Naive thymus-derived CD4-positive, alpha-beta T cell (primary cell): ENCODE measurements at regions of chr12 and their contacts with region 1.

Region 1: GRCh38 chr12:13100882-13101769 is 2.3 kb downstream of the GSG1 start:
- DNase-seq: peak; percentile 92 to 96 (median 94)
- ATAC-seq: peak; percentile 93
- H3K4me3 ChIP-seq: peak overlapping the region; percentile 68
- H3K4me3 Mint-ChIP-seq: peak overlapping the region; percentile 82 to 87 (median 84)
- H3K27ac ChIP-seq: peak overlapping the region; percentile 92
- H3K27ac Mint-ChIP-seq: peak overlapping the region; percentile 85 to 99 (median 95)
- H3K4me1 ChIP-seq: peaks cover 6 to 32% of the 10 kb centered on the region in 2 donors
- H3K4me1 Mint-ChIP-seq: peaks cover 24 to 49% (median 43%) of the 10 kb centered on the region in 7 donors
- H3K27me3 ChIP-seq: no peaks in the 10 kb centered on the region
- H3K27me3 Mint-ChIP-seq: peaks cover 0 to 5% (median 0%) of the 10 kb centered on the region in 5 donors

Region 2: DNA sequence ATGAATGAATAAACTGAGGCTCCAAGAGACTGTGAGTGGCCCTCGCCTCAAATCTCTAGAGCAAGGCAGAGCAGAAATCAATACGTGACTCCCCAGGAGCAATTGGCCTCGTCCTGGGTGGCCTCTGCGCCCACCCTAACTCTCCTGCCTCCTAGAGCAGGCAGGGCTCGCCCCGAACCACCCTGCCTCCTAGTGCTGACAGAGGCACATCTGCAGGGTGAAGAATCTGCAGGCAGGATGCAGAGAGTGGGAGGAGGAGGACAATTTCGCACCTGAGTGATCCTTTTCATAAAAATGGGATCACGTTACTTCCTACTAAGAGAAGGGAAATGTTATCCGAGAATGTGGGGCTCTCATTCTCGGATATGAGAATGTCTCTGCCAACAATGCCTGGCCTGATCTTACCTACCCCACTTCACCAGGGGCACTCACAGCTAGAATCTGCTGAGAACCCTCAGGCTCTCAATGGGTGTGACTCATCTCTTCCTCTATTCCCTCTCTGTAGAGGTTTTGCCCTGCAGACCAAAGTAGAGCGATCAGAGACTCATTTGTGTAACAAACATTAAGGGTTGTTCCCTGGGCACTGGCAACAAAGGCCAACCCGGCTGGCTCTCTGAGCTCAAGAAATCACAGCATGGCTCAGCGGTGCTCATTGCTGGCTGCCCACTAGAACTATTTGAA is 1092.1 kb before region 1 on chr12:
- CTCF ChIA-PET with region 1: no interaction called
- POLR2A ChIA-PET with region 1: no interaction called
- intact Hi-C with region 1: loop called in 1 of 2 experiments (anchors 1 kb)
- DNase-seq: peak in 7 of 9 donors; percentile 31 to 67 (median 36)
- ATAC-seq: peak; percentile 67
- H3K4me3 ChIP-seq: peak overlapping the region; percentile 15
- H3K4me3 Mint-ChIP-seq: peak overlapping the region; percentile 74 to 88 (median 82)
- H3K27ac ChIP-seq: peak overlapping the region; percentile 16
- H3K27ac Mint-ChIP-seq: peak overlapping the region; percentile 83 to 96 (median 90)
- H3K4me1 ChIP-seq: peaks cover 44 to 53% of the 10 kb centered on the region in 2 donors
- H3K4me1 Mint-ChIP-seq: peaks cover 53 to 88% (median 81%) of the 10 kb centered on the region in 7 donors
- H3K27me3 ChIP-seq: no peaks in the 10 kb centered on the region
- H3K27me3 Mint-ChIP-seq: peaks cover 0 to 9% (median 0%) of the 10 kb centered on the region in 5 donors

Region 3: GRCh38 chr12:12628013-12628412 is 473.1 kb before region 1 on chr12:
- CTCF ChIA-PET with region 1: no interaction called
- POLR2A ChIA-PET with region 1: no interaction called
- intact Hi-C with region 1: no loop called
- DNase-seq: no peak
- ATAC-seq: no peak
- H3K4me3 ChIP-seq: no peak overlapping the region
- H3K4me3 Mint-ChIP-seq: peak overlapping the region in 2 of 10 donors; percentile 21 to 36
- H3K27ac ChIP-seq: no peak overlapping the region
- H3K27ac Mint-ChIP-seq: peak overlapping the region in 3 of 9 donors; percentile 14 to 65 (median 15)
- H3K4me1 ChIP-seq: peaks cover 10 to 40% of the 10 kb centered on the region in 2 donors
- H3K4me1 Mint-ChIP-seq: peaks cover 40 to 86% (median 83%) of the 10 kb centered on the region in 7 donors
- H3K27me3 ChIP-seq: no peaks in the 10 kb centered on the region
- H3K27me3 Mint-ChIP-seq: no peaks in the 10 kb centered on the region

Region 4: GRCh38 chr12:12724661-12725545 is 376.2 kb before region 1 on chr12:
- CTCF ChIA-PET with region 1: no interaction called
- POLR2A ChIA-PET with region 1: interaction called, 4 read pairs
- intact Hi-C with region 1: loop called (anchors 1 to 5 kb)
- DNase-seq: peak; percentile 78 to 97 (median 92)
- ATAC-seq: peak; percentile 77
- H3K4me3 ChIP-seq: peak overlapping the region; percentile 53
- H3K4me3 Mint-ChIP-seq: peak overlapping the region; percentile 87 to 98 (median 94)
- H3K27ac ChIP-seq: peak overlapping the region; percentile 99
- H3K27ac Mint-ChIP-seq: peak overlapping the region; percentile 96 to 99 (median 97)
- H3K4me1 ChIP-seq: peaks cover 28% of the 10 kb centered on the region in 2 donors
- H3K4me1 Mint-ChIP-seq: peaks cover 23 to 64% (median 56%) of the 10 kb centered on the region in 7 donors
- H3K27me3 ChIP-seq: no peaks in the 10 kb centered on the region
- H3K27me3 Mint-ChIP-seq: peaks cover 0 to 7% (median 0%) of the 10 kb centered on the region in 5 donors

Region 5: DNA sequence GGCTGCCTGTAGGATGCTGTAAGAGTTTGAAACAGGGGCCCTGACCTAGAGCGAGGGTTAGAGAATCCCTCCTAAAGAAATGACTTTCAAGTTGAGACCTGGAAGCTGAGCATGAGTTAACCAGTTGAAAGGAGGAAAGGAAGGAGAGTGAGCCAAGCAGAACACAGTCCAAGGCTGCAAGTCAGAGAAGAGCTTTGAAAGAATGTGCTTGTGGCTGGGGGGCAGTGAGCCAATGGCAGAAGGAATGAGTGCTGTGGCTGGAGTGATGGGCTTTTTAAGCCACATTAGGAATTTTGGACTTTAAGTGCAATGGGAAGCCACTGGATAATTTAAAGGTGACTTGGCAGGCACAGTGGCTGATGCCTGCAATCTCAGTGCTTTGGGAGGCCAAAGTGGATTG is 365.8 kb before region 1 on chr12:
- CTCF ChIA-PET with region 1: no interaction called
- POLR2A ChIA-PET with region 1: no interaction called
- intact Hi-C with region 1: no loop called
- DNase-seq: no peak
- ATAC-seq: no peak
- H3K4me3 ChIP-seq: no peak overlapping the region
- H3K4me3 Mint-ChIP-seq: peak overlapping the region in 4 of 10 donors; percentile 6 to 69 (median 30)
- H3K27ac ChIP-seq: peak overlapping the region; percentile 40
- H3K27ac Mint-ChIP-seq: peak overlapping the region in 8 of 9 donors; percentile 63 to 97 (median 85)
- H3K4me1 ChIP-seq: peaks cover 9 to 33% of the 10 kb centered on the region in 2 donors
- H3K4me1 Mint-ChIP-seq: peaks cover 24 to 57% (median 41%) of the 10 kb centered on the region in 7 donors
- H3K27me3 ChIP-seq: no peaks in the 10 kb centered on the region
- H3K27me3 Mint-ChIP-seq: no peaks in the 10 kb centered on the region

Region 6: DNA sequence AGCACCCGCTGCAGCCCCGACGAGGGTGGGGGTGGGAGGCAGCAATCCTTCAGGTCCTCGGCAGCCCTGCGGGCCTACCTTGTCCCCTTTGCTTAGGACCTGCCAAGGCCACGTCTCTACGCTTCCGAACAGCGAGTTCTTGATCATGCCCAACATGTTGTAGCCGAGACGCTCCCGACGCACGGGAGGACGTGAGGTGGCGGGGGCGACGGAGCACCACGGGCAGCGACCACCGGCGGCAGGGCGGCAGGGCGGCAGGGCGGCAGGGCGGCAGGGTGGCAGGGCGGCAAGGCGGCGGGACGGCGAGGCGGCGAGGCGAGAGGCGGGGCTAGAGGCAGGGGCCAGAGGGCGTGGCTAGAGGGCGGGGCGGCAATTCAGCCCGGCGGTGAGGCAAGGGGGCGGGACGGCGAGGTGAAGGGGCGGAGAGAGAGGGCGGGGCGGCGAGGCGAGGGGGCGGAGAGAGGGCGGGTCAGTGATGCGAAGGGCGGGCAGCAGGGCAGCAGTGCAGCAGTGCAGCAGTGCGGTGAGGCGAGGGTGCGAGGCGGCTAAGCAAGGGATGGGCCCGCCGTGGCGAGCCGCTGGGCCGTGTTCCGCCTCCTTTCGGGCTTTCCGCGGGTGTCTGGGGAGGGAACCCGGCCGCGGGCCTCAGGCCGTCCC is 101.0 kb before region 1 on chr12 and contains the start of gene HEBP1:
- CTCF ChIA-PET with region 1: no interaction called
- POLR2A ChIA-PET with region 1: interaction called, 3 read pairs
- intact Hi-C with region 1: loop called (anchors 1 kb)
- DNase-seq: peak; percentile 86 to 99 (median 93)
- ATAC-seq: peak; percentile 97
- H3K4me3 ChIP-seq: peak within 1 kb of the TSS; percentile 74
- H3K4me3 Mint-ChIP-seq: peak within 1 kb of the TSS; percentile 90 to 98 (median 95)
- H3K27ac ChIP-seq: peak within 1 kb of the TSS; percentile 83
- H3K27ac Mint-ChIP-seq: peak within 1 kb of the TSS; percentile 53 to 96 (median 90)
- H3K4me1 ChIP-seq: peaks cover 8 to 23% of the 10 kb centered on the region in 2 donors
- H3K4me1 Mint-ChIP-seq: peaks cover 30 to 45% (median 35%) of the 10 kb centered on the region in 7 donors
- H3K27me3 ChIP-seq: peaks cover 0 to 5% of the 10 kb centered on the region in 2 donors
- H3K27me3 Mint-ChIP-seq: peaks cover 0 to 31% (median 0%) of the 10 kb centered on the region in 5 donors
- total RNA-seq, gene HEBP1: 10.9 to 23.4 (median 13.6) TPM

Region 7: GRCh38 chr12:13179211-13180074 is 78.3 kb after region 1 on chr12:
- CTCF ChIA-PET with region 1: interaction called, 3 read pairs
- POLR2A ChIA-PET with region 1: interaction called, 8 read pairs
- intact Hi-C with region 1: loop called in 1 of 2 experiments (anchors 1 kb)
- DNase-seq: peak in 8 of 9 donors; percentile 15 to 51 (median 44)
- ATAC-seq: peak; percentile 90
- H3K4me3 ChIP-seq: peak overlapping the region; percentile 22
- H3K4me3 Mint-ChIP-seq: peak overlapping the region; percentile 74 to 88 (median 78)
- H3K27ac ChIP-seq: no peak overlapping the region
- H3K27ac Mint-ChIP-seq: peak overlapping the region; percentile 57 to 88 (median 69)
- H3K4me1 ChIP-seq: peaks cover 0 to 16% of the 10 kb centered on the region in 2 donors
- H3K4me1 Mint-ChIP-seq: peaks cover 20 to 43% (median 33%) of the 10 kb centered on the region in 7 donors
- H3K27me3 ChIP-seq: peaks cover 0 to 3% of the 10 kb centered on the region in 2 donors
- H3K27me3 Mint-ChIP-seq: peaks cover 4 to 48% (median 7%) of the 10 kb centered on the region in 5 donors

Region 8: GRCh38 chr12:14365294-14366208 is 1264.4 kb after region 1 on chr12 and contains the start of gene ATF7IP:
- CTCF ChIA-PET with region 1: no interaction called
- POLR2A ChIA-PET with region 1: no interaction called
- intact Hi-C with region 1: loop called in 1 of 2 experiments (anchors 5 kb)
- DNase-seq: peak; percentile 91 to 98 (median 97)
- ATAC-seq: peak; percentile 93
- H3K4me3 ChIP-seq: peak within 1 kb of the TSS; percentile 83
- H3K4me3 Mint-ChIP-seq: peak within 1 kb of the TSS; percentile 78 to 97 (median 88)
- H3K27ac ChIP-seq: peak within 1 kb of the TSS; percentile 84
- H3K27ac Mint-ChIP-seq: peak within 1 kb of the TSS; percentile 88 to 98 (median 94)
- H3K4me1 ChIP-seq: peaks cover 13 to 20% of the 10 kb centered on the region in 2 donors
- H3K4me1 Mint-ChIP-seq: peaks cover 21 to 52% (median 34%) of the 10 kb centered on the region in 7 donors
- H3K27me3 ChIP-seq: no peaks in the 10 kb centered on the region
- H3K27me3 Mint-ChIP-seq: peaks cover 0 to 2% (median 0%) of the 10 kb centered on the region in 5 donors
- total RNA-seq, gene ATF7IP: 113 to 181 (median 144) TPM